HCT116 (cell line): ENCODE measurements at regions of chr19 and their contacts with region 1.

Region 1: DNA sequence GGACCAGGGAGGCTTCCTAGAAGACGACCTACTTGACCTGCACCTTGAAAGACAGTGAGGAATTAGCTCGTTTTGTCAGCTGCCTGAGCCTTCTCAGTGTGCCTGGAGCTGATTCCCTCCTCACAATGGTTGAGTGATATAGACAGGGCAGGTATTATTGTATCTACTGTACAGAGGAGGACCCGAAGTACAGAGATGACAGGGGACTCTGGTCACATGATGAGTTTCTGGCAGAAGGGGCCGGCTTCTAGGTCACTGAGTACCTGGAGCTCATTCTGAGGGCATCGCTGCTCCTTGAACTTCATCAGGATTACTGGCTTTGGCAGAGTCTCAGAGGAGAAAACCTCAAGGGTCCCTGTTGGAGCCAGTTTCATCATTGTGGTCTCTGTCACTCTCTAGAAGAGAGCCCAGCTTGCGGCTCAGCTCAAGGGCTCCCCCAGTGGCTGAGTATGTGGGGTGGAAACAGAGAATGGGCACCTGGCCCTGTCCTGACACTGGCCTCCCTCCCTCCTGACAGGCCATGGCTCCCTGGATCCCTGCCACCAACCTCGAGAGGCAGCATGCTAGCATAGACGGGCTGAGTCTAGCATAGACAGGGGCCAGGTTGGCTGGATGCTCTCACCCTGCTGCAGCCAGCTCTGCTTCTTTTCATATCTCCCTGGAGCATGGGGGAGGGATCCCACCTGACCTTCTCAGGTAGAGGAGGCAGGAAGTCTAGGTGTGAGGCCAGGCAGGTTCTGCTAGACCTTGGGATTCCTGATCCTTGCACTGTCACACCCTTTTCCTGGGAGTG is 38.7 kb downstream of the NFIX start:
- DNase-seq: peak; percentile 39
- ATAC-seq: peak; percentile 80
- H3K4me3 ChIP-seq: no peak overlapping the region
- H3K27ac ChIP-seq: no peak overlapping the region
- H3K4me1 ChIP-seq: peaks cover 55 to 76% of the 10 kb centered on the region in 2 experiments
- H3K27me3 ChIP-seq: no peaks in the 10 kb centered on the region
- CTCF ChIP-seq: peak; percentile 63 to 96 (median 94); a peak in 5 of 6 replicates
- POLR2A ChIP-seq: no peak
- RAD21 ChIP-seq: peak; percentile 54

Region 2: DNA sequence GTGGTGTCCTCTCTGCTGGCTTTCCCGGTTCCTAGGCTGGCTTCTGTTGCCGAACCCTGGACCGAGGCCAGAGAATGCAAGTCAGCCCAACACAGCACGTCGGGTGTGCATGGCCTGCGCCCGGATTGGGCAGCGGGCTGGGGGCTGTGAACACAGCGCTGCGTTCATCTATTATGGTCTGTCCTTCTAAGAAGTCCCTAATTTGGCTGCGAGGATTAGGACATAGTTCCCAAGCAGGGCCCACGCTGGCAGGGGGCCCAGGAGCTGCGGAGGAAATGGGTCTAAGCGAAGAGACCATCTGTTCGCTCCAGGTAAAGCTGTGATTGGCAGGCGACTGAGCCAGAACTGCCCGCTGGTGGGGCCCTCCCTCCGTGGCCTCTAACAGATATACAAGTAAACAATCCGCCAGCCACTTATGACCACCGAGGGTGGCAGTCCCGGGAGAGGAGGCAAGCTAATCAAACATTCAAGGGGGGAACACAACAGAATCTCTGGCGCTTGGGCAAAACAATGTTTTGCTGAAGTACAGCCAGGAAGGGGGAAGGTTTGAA is 120.9 kb before region 1 on chr19:
- CTCF ChIA-PET with region 1: no interaction called
- POLR2A ChIA-PET with region 1: no interaction called
- RAD21 ChIA-PET with region 1: no interaction called
- intact Hi-C with region 1: no loop called
- DNase-seq: no peak
- ATAC-seq: no peak
- H3K4me3 ChIP-seq: no peak overlapping the region
- H3K27ac ChIP-seq: no peak overlapping the region
- H3K4me1 ChIP-seq: no peaks in the 10 kb centered on the region
- H3K27me3 ChIP-seq: no peaks in the 10 kb centered on the region
- CTCF ChIP-seq: no peak
- POLR2A ChIP-seq: no peak
- RAD21 ChIP-seq: no peak

Region 3: GRCh38 chr19:12945479-12946091 is 88.4 kb before region 1 on chr19 and contains the start of gene RAD23A:
- CTCF ChIA-PET with region 1: no interaction called
- POLR2A ChIA-PET with region 1: no interaction called
- RAD21 ChIA-PET with region 1: no interaction called
- intact Hi-C with region 1: no loop called
- DNase-seq: peak; percentile 96
- ATAC-seq: peak; percentile 85
- H3K4me3 ChIP-seq: peak within 1 kb of the TSS; percentile 80 to 98
- H3K27ac ChIP-seq: peak within 1 kb of the TSS; percentile 76
- H3K4me1 ChIP-seq: peaks cover 3 to 24% of the 10 kb centered on the region in 2 experiments; a peak in 3 of 4 replicates
- H3K27me3 ChIP-seq: no peaks in the 10 kb centered on the region
- CTCF ChIP-seq: no peak
- POLR2A ChIP-seq: peak; percentile 41
- RAD21 ChIP-seq: no peak
- total RNA-seq, gene RAD23A: 163 TPM

Region 4: DNA sequence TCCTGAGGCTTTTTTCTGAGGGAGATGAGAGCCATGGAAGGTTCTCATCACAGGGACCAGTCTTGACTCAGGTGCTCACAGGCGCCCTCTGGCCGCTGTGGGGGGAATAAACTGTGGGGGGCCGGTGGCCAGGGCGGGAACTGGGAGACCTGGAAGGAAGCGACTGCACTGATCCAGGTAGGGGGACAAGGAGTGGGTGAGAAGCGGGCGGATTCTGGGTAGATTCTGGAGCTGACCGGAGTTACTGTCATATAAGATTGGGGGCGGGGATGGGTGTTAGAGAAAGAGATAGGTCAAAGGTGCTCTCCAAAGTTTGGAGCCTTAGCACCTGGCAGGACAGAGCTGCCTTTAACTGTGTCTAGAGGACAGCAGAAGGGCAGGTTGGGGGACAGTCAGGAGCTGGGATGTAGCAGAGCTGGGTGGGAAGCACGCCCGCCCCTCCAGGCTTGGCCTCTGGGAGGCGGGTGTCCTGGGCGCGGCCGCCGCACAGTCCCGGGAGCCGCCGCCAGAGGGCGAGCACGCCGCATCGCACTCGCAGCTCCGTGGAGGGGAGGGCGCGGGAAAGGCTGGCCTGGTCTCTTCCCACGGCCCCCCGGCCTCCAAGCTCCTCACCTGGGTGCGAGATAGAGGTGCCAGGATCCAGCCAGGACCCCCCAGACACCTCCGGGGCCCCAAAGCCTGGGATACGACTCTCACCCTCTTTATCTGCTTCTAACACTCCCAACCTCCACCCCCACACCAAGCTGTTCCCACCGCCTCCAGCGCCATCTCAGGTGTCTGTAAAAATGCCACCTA is 68.8 kb before region 1 on chr19:
- CTCF ChIA-PET with region 1: interaction called, 10 read pairs
- POLR2A ChIA-PET with region 1: no interaction called
- RAD21 ChIA-PET with region 1: no interaction called
- intact Hi-C with region 1: no loop called
- DNase-seq: peak; percentile 73
- ATAC-seq: peak; percentile 93
- H3K4me3 ChIP-seq: peak overlapping the region; percentile 35 to 52
- H3K27ac ChIP-seq: peak overlapping the region; percentile 54
- H3K4me1 ChIP-seq: peaks cover 3 to 18% of the 10 kb centered on the region in 2 experiments; a peak in 3 of 4 replicates
- H3K27me3 ChIP-seq: no peaks in the 10 kb centered on the region
- CTCF ChIP-seq: peak; percentile 72 to 98 (median 91)
- POLR2A ChIP-seq: peak; percentile 11
- RAD21 ChIP-seq: peak; percentile 77

Region 5: DNA sequence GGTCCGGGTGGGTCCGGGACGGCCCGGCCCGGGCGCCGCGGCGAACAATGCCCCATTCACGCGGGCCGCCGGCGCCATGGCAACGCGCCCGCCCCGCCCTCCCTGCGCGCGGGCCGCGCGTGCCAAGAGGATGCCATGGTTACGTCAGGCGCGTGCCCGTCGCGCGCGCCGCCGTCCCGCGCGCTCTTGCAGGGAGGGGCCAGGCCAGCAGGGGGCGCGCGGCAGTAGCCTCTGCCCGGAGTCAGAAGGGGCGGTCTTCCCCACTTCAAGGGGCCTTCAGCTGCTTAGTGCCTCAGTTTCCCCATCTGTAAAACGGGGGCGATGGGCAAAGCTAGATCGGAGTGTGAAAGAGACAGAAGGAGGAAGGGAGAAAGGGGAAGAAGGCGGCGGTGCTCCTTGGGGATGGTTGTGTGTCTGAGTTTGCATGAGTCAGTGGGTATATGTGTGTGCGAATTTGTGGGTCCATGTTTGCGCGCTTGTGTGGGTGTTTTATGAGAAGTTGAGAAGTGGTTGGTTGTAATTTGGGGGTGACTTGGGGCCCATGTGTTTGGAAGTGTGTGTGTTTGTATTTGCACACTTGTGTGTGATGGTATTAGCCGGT is 50.4 kb before region 1 on chr19:
- CTCF ChIA-PET with region 1: interaction called, 16 read pairs
- POLR2A ChIA-PET with region 1: no interaction called
- RAD21 ChIA-PET with region 1: interaction called in 1 of 2 experiments, 4 read pairs
- intact Hi-C with region 1: loop called (anchors 1 kb)
- DNase-seq: peak; percentile 36
- ATAC-seq: peak; percentile 67
- H3K4me3 ChIP-seq: no peak overlapping the region
- H3K27ac ChIP-seq: no peak overlapping the region
- H3K4me1 ChIP-seq: peaks cover 21 to 28% of the 10 kb centered on the region in 2 experiments; a peak in 3 of 4 replicates
- H3K27me3 ChIP-seq: no peaks in the 10 kb centered on the region
- CTCF ChIP-seq: peak; percentile 86 to 94 (median 90)
- POLR2A ChIP-seq: no peak
- RAD21 ChIP-seq: peak; percentile 94

Region 6: DNA sequence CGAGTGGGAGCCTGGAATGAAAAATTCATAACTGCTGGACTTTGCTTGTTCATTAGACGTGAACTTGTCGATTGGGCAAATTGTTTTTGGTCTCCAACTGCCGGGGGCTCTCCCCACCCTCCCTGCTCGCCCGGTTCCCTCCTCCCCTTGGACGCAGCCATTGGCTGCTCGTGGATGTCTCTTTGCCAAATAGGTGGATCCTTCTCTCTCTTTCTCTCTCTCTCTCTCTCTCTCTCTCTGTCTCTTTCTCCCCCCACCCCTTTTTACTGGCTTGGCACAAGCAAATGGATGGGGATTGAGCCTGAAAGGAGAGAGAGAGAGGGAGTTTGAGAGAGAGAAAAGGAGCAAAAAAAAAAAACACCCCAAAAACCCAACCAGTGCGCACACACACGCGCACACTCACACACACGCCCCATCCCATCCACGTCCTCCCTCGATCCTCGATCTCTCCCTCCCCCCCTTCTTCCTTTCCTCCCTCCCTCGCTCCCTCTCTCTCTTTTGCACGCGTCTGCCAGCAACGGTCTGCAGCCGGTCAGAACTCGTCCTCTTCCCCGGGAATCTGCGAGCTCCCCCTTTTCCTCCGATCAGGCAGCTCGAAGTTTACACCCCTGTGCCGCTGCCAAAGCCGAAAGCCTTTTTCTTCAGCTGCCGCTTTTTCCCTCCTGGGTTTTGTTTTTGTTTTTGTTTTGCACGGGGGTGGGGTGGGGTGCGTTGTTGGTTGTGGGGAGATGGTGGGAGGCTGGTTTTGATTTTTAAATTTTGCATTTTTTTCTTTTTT is 11.0 kb before region 1 on chr19:
- CTCF ChIA-PET with region 1: interaction called, 11 read pairs
- POLR2A ChIA-PET with region 1: no interaction called
- RAD21 ChIA-PET with region 1: no interaction called
- intact Hi-C with region 1: no loop called
- DNase-seq: no peak
- ATAC-seq: no peak
- H3K4me3 ChIP-seq: no peak overlapping the region
- H3K27ac ChIP-seq: no peak overlapping the region
- H3K4me1 ChIP-seq: peaks cover 5% of the 10 kb centered on the region in 2 experiments; a peak in 2 of 4 replicates
- H3K27me3 ChIP-seq: no peaks in the 10 kb centered on the region
- CTCF ChIP-seq: no peak
- POLR2A ChIP-seq: no peak
- RAD21 ChIP-seq: no peak

Region 7: DNA sequence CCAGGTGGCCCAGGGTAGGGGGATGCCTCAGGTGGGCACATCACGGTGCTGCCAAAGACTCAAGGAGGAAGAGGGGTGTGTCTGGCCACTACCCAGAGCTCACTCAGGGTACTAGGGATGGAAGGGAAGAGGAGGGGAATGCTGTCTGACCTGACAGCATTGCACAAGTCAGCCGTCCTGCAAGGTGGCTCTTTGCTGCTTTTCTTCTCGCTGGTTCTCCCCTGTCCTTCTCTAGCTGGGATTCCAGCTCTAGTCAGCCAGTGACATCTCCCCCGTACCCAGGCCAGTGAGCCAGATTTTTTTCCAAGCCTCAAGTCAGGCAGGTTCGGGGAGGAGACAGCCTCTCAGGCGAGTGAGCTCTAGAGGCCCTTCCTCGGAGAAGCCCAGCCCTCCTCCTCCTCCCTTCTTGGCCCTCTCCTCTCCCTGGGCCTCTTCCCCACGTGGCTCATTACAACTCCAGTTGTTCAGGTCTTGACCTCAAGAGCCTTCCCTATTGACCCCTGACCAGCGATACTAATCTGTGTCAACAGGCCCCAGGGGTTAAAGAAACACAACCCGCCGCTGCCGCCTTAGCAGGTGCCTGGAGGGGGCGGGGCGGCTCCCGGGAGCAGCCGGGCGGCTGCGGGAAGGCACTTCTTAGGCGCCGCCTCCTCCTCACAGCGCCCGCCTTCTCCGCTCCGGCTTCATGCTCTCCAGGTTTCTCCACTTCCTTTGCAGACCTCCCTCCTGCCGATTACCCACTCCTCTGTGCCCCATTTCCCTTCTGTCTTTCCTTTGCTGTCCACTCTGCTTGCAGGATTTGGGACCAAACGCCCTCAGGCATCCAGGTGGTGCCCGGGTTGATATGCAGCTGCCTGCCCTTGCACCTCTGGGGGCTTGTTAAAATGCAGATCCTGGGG is 17.5 kb after region 1 on chr19:
- CTCF ChIA-PET with region 1: interaction called, 155 read pairs
- POLR2A ChIA-PET with region 1: interaction called, 16 read pairs
- RAD21 ChIA-PET with region 1: interaction called, 4 read pairs
- intact Hi-C with region 1: no loop called
- DNase-seq: no peak
- ATAC-seq: peak; percentile 45
- H3K4me3 ChIP-seq: peak overlapping the region; percentile 28 to 40
- H3K27ac ChIP-seq: peak overlapping the region; percentile 33; the same call in 1 of the 2 replicates
- H3K4me1 ChIP-seq: peaks cover 58 to 62% of the 10 kb centered on the region in 2 experiments
- H3K27me3 ChIP-seq: no peaks in the 10 kb centered on the region
- CTCF ChIP-seq: no peak
- POLR2A ChIP-seq: no peak
- RAD21 ChIP-seq: no peak

Region 8: DNA sequence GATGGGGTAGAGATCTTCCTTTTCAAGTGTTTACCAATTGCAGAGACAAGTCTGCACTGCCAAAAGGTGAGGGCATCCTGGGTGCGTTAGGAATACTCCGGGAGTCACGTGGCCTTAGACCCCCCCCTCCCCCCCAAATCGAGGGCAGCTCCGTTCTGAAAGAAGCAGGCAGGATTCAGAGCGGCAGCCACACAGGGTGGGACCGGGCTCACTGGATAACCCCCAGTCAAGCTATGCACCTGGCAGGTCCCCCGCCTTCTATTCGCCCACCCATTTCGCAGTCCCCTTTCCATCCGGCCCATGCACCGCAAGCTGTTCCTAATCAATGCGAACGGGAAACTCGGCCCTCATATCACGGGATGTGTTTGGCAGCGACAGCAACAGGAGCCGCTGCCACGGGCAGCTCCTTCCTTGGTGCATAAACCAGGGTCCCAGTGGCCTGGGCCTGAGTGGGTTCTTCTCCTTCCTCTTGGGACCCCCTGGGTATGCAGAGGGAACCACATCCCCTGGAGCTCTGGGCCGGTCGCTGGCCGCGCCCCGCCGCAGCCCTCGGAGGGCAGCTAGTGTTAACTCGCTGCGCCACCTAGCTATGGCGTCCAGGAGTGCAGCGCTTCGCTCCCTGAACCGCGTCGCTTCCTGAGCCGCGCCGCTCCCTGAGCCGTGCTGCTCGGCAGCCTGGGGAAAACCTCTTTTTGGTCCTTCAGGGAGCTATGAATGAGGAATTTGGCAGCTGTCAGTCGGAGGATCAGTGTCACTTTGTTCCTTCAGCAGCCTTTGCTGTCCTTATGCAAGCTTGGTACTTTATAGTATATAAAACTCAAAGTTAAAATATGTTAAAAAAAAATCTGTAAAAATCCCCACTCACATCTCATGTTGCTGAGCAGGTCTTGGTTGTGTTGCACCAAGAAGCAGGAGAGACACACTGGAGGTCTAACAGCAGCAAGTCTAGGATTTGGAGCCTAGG is 27.2 kb after region 1 on chr19:
- CTCF ChIA-PET with region 1: interaction called, 155 read pairs
- POLR2A ChIA-PET with region 1: interaction called, 5 read pairs
- RAD21 ChIA-PET with region 1: interaction called, 15 to 30 read pairs
- intact Hi-C with region 1: loop called (anchors 1 kb)
- DNase-seq: peak; percentile 59
- ATAC-seq: peak; percentile 86
- H3K4me3 ChIP-seq: peak overlapping the region; percentile 51 to 66
- H3K27ac ChIP-seq: peak overlapping the region; percentile 78
- H3K4me1 ChIP-seq: peaks cover 41 to 56% of the 10 kb centered on the region in 2 experiments
- H3K27me3 ChIP-seq: no peaks in the 10 kb centered on the region
- CTCF ChIP-seq: peak; percentile 87 to 97 (median 92)
- POLR2A ChIP-seq: no peak
- RAD21 ChIP-seq: peak; percentile 99

Region 9: DNA sequence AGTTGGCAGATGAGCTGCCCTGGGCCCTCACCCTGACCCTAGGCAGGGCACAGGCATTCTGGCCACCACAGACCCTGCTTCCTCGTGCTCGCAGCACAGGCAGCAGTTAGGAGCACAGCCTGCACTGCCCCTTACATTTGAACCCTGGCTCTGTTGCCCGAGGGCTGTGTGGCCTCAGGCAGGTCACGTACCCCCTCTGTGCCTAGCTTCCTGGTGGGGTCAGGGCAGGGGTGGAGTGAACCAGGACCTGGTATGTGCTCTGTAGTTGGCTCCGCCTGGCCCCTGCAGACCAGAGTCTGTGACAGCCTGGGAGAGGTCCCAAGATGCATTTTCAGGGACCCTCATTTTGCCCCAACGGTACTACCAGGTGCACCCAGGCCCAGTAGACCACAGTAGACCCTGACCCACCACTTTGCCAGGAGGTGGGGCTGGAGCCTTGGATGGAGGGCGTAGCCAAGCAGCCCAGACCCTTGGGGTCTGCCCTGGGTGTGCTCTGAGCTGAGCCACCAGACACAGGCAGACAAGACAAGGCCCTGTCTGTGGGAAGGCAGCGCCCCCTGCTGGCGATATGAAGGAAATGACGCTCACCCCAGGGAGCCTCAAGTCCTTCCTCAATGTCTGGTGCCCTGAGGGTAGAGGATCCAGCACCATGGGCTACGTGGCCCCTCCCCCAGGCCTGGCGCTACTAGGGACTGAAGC is 59.5 kb after region 1 on chr19:
- CTCF ChIA-PET with region 1: interaction called, 10 read pairs
- POLR2A ChIA-PET with region 1: no interaction called
- RAD21 ChIA-PET with region 1: interaction called, 6 read pairs
- intact Hi-C with region 1: loop called (anchors 5 kb)
- DNase-seq: peak; percentile 70
- ATAC-seq: peak; percentile 80
- H3K4me3 ChIP-seq: no peak overlapping the region
- H3K27ac ChIP-seq: no peak overlapping the region; the same call in 1 of the 2 replicates
- H3K4me1 ChIP-seq: peaks cover 6 to 27% of the 10 kb centered on the region in 2 experiments; a peak in 3 of 4 replicates
- H3K27me3 ChIP-seq: no peaks in the 10 kb centered on the region
- CTCF ChIP-seq: peak; percentile 84 to 94 (median 92)
- POLR2A ChIP-seq: no peak
- RAD21 ChIP-seq: peak; percentile 99